Activated CD4-positive, alpha-beta T cell treated with anti-CD3 and anti-CD28 coated beads, Interleukin-2, amount 10 ng/mL, durations not matched to agents 24 days and 14 days (primary cell): ENCODE measurements at regions of chr2 and their contacts with region 1.

Region 1: GRCh38 chr2:64214281-64215115 is 70.3 kb upstream of the PELI1 start:
- DNase-seq: peak; percentile 80
- H3K4me3 Mint-ChIP-seq: peak overlapping the region; percentile 74
- H3K27ac Mint-ChIP-seq: peak overlapping the region; percentile 97
- H3K4me1 Mint-ChIP-seq: peaks cover 41% of the 10 kb centered on the region
- H3K27me3 Mint-ChIP-seq: no peaks in the 10 kb centered on the region

Region 2: GRCh38 chr2:63977904-63978303 is 236.6 kb before region 1 on chr2:
- intact Hi-C with region 1: loop called (anchors 5 kb)
- DNase-seq: peak; percentile 80
- H3K4me3 Mint-ChIP-seq: peak overlapping the region; percentile 26
- H3K27ac Mint-ChIP-seq: peak overlapping the region; percentile 74
- H3K4me1 Mint-ChIP-seq: peaks cover 23% of the 10 kb centered on the region
- H3K27me3 Mint-ChIP-seq: no peaks in the 10 kb centered on the region

Region 3: GRCh38 chr2:64101141-64101591 is 113.3 kb before region 1 on chr2:
- intact Hi-C with region 1: loop called (anchors 1 kb)
- DNase-seq: no peak
- H3K4me3 Mint-ChIP-seq: peak overlapping the region; percentile 18
- H3K27ac Mint-ChIP-seq: peak overlapping the region; percentile 85
- H3K4me1 Mint-ChIP-seq: peaks cover 37% of the 10 kb centered on the region
- H3K27me3 Mint-ChIP-seq: no peaks in the 10 kb centered on the region

Region 4: GRCh38 chr2:64133828-64134227 is 80.7 kb before region 1 on chr2:
- intact Hi-C with region 1: loop called (anchors 1 kb)
- DNase-seq: no peak
- H3K4me3 Mint-ChIP-seq: peak overlapping the region; percentile 60
- H3K27ac Mint-ChIP-seq: peak overlapping the region; percentile 89
- H3K4me1 Mint-ChIP-seq: peaks cover 72% of the 10 kb centered on the region
- H3K27me3 Mint-ChIP-seq: no peaks in the 10 kb centered on the region

Region 5: GRCh38 chr2:64165706-64166105 is 48.8 kb before region 1 on chr2:
- intact Hi-C with region 1: loop called (anchors 1 kb)
- DNase-seq: no peak
- H3K4me3 Mint-ChIP-seq: no peak overlapping the region
- H3K27ac Mint-ChIP-seq: no peak overlapping the region
- H3K4me1 Mint-ChIP-seq: peaks cover 3% of the 10 kb centered on the region
- H3K27me3 Mint-ChIP-seq: no peaks in the 10 kb centered on the region

Region 6: DNA sequence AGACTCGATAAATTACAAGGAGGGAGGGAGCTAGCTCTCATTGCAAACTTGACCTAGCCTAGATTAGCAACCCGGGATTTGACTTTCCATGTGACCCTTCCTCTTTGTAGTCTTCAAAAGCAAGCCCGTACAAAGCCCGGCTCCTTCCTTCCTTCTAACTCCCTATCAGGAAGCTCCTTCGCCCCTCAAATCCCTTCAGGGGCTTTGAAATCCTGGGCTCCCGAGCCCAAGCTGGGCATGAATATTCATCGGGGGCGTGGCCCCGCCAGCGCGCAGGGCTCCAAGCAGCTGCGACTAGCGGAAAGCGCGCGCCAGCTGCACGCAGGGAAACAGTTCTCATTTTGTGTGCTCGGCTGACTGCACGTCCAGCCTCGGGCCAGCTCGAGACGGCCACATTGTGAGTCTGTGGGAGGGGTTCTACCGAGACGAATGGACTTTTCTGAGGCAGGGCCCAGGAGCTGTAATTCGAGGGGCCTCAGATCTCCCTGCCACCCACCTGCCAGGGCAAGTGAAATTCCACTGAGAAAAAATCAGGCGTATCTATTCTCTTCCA is 13.7 kb after region 1 on chr2:
- intact Hi-C with region 1: loop called (anchors 1 kb)
- DNase-seq: peak; percentile 90
- H3K4me3 Mint-ChIP-seq: peak overlapping the region; percentile 88
- H3K27ac Mint-ChIP-seq: peak overlapping the region; percentile 85
- H3K4me1 Mint-ChIP-seq: peaks cover 30% of the 10 kb centered on the region
- H3K27me3 Mint-ChIP-seq: peaks cover 6% of the 10 kb centered on the region